ENCODE measurements at regions of chr19 and their contacts with region 1.

Region 1: DNA sequence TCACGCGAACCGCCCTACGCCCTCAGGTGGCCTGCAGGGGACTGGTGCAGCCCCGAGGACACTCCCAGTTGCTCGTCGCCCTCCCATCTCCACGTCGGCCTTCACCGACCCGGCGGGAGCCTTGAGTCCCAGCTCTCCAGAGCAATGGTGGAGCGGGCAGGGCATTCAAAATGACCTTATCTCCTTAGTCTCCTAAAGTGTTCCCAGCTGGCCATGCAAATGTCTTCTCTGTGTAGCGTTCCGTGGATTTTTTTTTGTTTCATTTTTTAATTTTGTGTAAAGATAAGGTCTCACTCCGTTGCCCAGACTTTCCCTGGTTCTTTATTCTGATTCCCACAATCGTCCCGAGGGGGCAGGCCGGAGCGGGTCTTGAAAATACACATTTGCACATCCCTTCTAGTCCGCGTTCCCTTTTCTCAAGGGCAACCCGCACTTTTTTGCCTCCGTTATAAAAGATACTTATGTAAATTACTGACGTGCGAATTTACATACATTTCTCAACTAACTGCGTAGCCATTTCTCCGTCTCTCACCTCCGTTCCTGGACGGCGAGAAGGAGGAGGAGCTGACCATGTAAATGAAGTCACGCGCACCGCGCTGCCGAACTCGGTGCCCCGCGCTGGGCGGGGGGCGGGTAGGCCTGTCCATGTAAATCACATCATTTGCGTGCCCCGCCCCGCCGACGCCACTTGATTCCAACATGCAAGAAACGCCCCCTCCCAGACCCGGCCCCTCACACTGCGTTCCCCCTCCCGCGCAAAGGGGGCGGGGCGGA is 581 bp upstream of the EGLN2 start:
- DNase-seq: peak; percentile 100
- H3K4me3 ChIP-seq: peak overlapping the region; percentile 50
- H3K4me3 Mint-ChIP-seq: peak overlapping the region; percentile 100
- H3K27ac Mint-ChIP-seq: peak overlapping the region; percentile 96
- H3K4me1 ChIP-seq: peaks cover 15% of the 10 kb centered on the region
- H3K4me1 Mint-ChIP-seq: peaks cover 10% of the 10 kb centered on the region
- H3K27me3 ChIP-seq: no peaks in the 10 kb centered on the region
- H3K27me3 Mint-ChIP-seq: no peaks in the 10 kb centered on the region
- CTCF ChIP-seq: peak; percentile 57 to 63

Region 2: GRCh38 chr19:40662921-40663694 is 135.3 kb before region 1 on chr19:
- CTCF ChIA-PET with region 1: interaction called, 11 read pairs
- POLR2A ChIA-PET with region 1: no interaction called
- intact Hi-C with region 1: loop called (anchors 2 kb)
- DNase-seq: peak; percentile 88 to 95
- H3K4me3 ChIP-seq: peak overlapping the region; percentile 86
- H3K4me3 Mint-ChIP-seq: peak overlapping the region; percentile 82
- H3K27ac Mint-ChIP-seq: peak overlapping the region; percentile 68
- H3K4me1 ChIP-seq: no peaks in the 10 kb centered on the region
- H3K4me1 Mint-ChIP-seq: no peaks in the 10 kb centered on the region
- H3K27me3 ChIP-seq: no peaks in the 10 kb centered on the region
- H3K27me3 Mint-ChIP-seq: no peaks in the 10 kb centered on the region
- CTCF ChIP-seq: peak; percentile 94 to 98

Region 3: GRCh38 chr19:40716655-40717324 is 81.6 kb before region 1 on chr19 and contains the starts of genes COQ8B and ITPKC:
- CTCF ChIA-PET with region 1: no interaction called
- POLR2A ChIA-PET with region 1: interaction called, 7 read pairs
- intact Hi-C with region 1: loop called (anchors 2 kb)
- DNase-seq: peak; percentile 100
- H3K4me3 ChIP-seq: peak within 1 kb of the TSS; percentile 71
- H3K4me3 Mint-ChIP-seq: peak within 1 kb of the TSS; percentile 84
- H3K27ac Mint-ChIP-seq: peak within 1 kb of the TSS; percentile 93
- H3K4me1 ChIP-seq: peaks cover 6% of the 10 kb centered on the region; the same call in 1 of the 2 replicates
- H3K4me1 Mint-ChIP-seq: peaks cover 18% of the 10 kb centered on the region
- H3K27me3 ChIP-seq: no peaks in the 10 kb centered on the region
- H3K27me3 Mint-ChIP-seq: no peaks in the 10 kb centered on the region
- CTCF ChIP-seq: no peak
- total RNA-seq, gene COQ8B: 30.9 and 35.7 TPM in 2 replicates
- total RNA-seq, gene ITPKC: 28.5 and 31.2 TPM in 2 replicates

Region 4: GRCh38 chr19:40737102-40737644 is 61.2 kb before region 1 on chr19:
- CTCF ChIA-PET with region 1: no interaction called
- POLR2A ChIA-PET with region 1: no interaction called
- intact Hi-C with region 1: no loop called
- DNase-seq: no peak
- H3K4me3 ChIP-seq: no peak overlapping the region
- H3K4me3 Mint-ChIP-seq: no peak overlapping the region
- H3K27ac Mint-ChIP-seq: no peak overlapping the region
- H3K4me1 ChIP-seq: no peaks in the 10 kb centered on the region
- H3K4me1 Mint-ChIP-seq: peaks cover 19% of the 10 kb centered on the region
- H3K27me3 ChIP-seq: no peaks in the 10 kb centered on the region
- H3K27me3 Mint-ChIP-seq: no peaks in the 10 kb centered on the region
- CTCF ChIP-seq: no peak